BJ (cell line): ENCODE measurements at regions of chr9 and their contacts with region 1.

Region 1: GRCh38 chr9:83937911-83938323 is 16.7 kb upstream of the KIF27 start:
- DNase-seq: no peak
- H3K4me3 ChIP-seq: no peak overlapping the region
- H3K27me3 ChIP-seq: no peaks in the 10 kb centered on the region
- CTCF ChIP-seq: peak; percentile 59; the same call in 1 of the 2 replicates

Region 2: DNA sequence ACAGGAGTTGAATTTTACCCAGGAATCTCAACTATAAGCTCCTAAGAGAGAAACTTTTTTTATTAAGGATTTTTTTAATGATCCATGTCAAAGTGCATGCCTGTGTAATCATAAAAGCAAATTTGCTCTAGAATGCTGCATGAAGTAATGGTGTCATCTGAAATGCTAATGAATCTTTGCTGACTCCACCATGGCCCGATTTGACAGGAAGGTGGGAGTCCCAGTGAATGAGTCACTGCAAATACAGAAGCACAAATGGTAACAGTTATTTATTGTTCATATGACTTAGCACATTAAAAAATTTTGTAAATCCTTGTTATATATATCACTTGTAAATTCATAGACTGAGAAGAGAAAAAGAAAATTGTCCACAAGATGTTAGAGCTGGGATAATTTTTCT is 1216.3 kb before region 1 on chr9:
- CTCF ChIA-PET with region 1: no interaction called
- POLR2A ChIA-PET with region 1: no interaction called
- DNase-seq: no peak
- H3K4me3 ChIP-seq: no peak overlapping the region
- H3K27me3 ChIP-seq: no peaks in the 10 kb centered on the region
- CTCF ChIP-seq: no peak

Region 3: DNA sequence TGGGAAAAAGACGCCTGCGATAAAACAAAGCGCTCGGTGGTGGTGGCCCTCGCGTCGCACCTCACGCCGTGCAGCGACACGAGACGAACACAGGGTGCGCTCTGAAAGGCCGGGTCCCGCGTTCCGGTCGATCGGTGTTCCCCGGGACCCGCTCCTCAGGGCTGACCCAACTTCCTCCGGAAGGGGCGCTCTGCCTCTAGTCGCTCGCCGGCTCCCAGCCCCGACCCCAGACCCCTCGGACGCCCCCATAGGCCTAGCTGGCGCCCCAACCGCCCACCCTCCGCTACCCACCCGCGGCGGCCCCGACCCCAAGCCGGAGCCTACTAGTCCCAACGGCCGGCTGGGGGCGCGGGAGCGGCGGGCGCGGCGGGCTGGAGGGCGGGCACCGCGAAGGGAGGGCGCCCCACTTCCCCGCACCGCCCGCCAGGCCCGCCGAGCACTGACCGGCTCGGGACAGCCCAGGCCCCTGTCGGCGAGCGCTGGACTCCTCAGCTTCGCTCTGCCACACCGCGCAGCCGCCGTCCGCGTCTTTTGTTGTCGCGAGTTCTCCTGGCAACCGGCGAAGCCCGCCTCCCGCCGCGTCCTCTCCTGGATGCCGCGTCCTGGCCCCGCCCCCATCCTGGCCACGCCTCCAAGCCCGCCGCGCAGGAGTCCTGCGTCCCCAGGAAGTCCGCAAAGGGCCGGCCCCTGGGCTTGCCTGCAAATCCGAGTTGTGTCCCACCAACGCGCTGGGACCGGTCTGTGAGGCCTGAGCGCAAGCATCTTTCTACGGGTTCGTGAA is 16.8 kb before region 1 on chr9 and contains the start of gene KIF27:
- CTCF ChIA-PET with region 1: interaction called, 13 read pairs
- POLR2A ChIA-PET with region 1: no interaction called
- DNase-seq: peak; percentile 83
- H3K4me3 ChIP-seq: peak within 1 kb of the TSS; percentile 73
- H3K27me3 ChIP-seq: no peaks in the 10 kb centered on the region
- CTCF ChIP-seq: peak; percentile 40; the same call in 1 of the 2 replicates
- polyA plus RNA-seq, gene KIF27: 0.54 and 1.5 TPM in 2 replicates

Region 4: DNA sequence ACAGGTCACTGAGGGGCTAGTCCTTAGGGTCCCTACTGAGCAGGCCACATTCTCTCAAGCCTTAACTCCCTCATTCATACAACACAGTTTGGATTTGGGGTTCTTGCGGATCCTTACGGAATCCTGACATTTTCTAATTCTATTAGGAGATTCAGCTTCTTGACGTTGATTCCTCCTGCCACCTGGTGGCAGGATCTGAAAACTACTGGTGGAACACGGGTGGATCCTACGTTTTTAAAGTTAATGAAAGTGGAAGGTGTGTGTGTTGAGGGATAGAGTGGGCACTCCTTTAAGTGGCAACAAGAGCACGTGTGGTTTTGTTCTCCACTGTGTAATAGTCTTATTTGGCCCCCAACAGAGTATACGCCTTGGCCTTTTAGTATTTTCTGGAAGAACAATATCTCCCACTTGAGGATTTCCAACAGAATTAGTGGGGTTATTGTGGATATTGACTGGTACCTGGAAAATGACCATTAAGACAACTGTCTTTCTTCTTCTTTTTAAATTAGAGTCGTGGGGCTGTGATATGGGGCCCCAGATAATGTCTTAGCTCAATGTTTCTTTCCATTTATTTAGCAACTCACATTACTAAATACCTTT is 377.5 kb after region 1 on chr9:
- CTCF ChIA-PET with region 1: interaction called, 42 read pairs
- POLR2A ChIA-PET with region 1: no interaction called
- DNase-seq: no peak
- H3K4me3 ChIP-seq: no peak overlapping the region
- H3K27me3 ChIP-seq: no peaks in the 10 kb centered on the region
- CTCF ChIP-seq: peak; percentile 82